ENCODE measurements at regions of chr2 and their contacts with region 1.

Region 1: GRCh38 chr2:197499594-197500526 is at the starts of genes HSPD1 and HSPE1:
- DNase-seq: peak; percentile 97
- ATAC-seq: peak; percentile 88
- H3K4me3 ChIP-seq: peak within 1 kb of the TSS; percentile 88
- H3K27ac ChIP-seq: peak within 1 kb of the TSS; percentile 91
- H3K4me1 ChIP-seq: peaks cover 13% of the 10 kb centered on the region
- H3K27me3 ChIP-seq: no peaks in the 10 kb centered on the region
- CTCF ChIP-seq: no peak
- EP300 ChIP-seq: peak in 1 of 2 experiments; percentile 98; a peak in 2 of 4 replicates
- POLR2A ChIP-seq: peak; percentile 96
- RAD21 ChIP-seq: no peak
- polyA plus RNA-seq, gene HSPD1: 659 to 997 TPM
- polyA plus RNA-seq, gene HSPE1: 872 to 988 TPM

Region 2: GRCh38 chr2:197425550-197425949 is 74.3 kb before region 1 on chr2:
- CTCF ChIA-PET with region 1: no interaction called
- POLR2A ChIA-PET with region 1: interaction called, 45 read pairs
- RAD21 ChIA-PET with region 1: no interaction called
- SMC1A ChIA-PET with region 1: no interaction called
- in situ Hi-C with region 1: no loop called
- intact Hi-C with region 1: loop called (anchors 2 kb)
- DNase-seq: no peak
- ATAC-seq: no peak
- H3K4me3 ChIP-seq: no peak overlapping the region
- H3K27ac ChIP-seq: no peak overlapping the region
- H3K4me1 ChIP-seq: 0 out of 2 replicates have a peak, but pooled peaks cover 3% of the 10 kb centered on the region
- H3K27me3 ChIP-seq: no peaks in the 10 kb centered on the region
- CTCF ChIP-seq: no peak
- EP300 ChIP-seq: no peak
- POLR2A ChIP-seq: no peak
- RAD21 ChIP-seq: no peak

Region 3: DNA sequence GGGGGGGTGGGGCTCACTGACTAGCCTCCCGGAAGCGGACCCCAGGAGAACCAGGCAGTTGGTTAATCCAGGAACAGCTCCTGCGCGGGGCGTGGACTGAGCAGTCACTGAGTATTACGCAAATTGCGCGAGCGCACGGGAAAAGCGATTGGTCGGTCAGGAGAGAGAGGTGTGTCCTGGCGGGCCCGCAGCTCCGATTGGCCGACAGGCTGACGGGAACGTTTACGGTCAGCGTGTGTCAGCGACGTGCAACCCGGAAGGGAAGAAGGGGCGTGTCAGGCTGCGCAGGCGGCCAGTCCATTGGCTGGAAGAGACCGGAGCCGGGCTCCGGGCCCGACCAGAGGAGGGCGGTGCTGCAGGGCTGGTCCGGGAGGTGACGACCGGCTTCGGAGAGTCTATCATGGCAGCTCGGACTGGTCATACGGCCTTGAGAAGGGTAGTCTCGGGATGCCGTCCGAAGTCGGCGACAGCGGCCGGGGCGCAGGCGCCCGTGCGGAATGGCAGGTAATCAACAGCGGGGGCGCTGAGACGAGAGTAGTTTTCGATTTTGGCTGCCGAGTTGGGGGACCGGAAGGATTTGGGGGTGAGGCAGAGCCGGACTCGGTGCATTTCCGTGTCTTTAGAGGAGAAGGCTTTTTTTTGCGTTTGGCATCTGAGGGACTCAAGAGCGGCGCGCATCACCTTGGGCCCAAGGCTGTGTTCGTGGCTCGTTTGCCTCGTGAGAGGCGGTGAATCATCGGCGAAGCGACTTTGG is 46.5 kb before region 1 on chr2 and contains the start of gene COQ10B:
- CTCF ChIA-PET with region 1: interaction called, 3 read pairs
- POLR2A ChIA-PET with region 1: interaction called, 43 read pairs
- RAD21 ChIA-PET with region 1: interaction called, 10 read pairs
- SMC1A ChIA-PET with region 1: interaction called, 9 read pairs
- in situ Hi-C with region 1: no loop called
- intact Hi-C with region 1: loop called (anchors 2 kb)
- DNase-seq: peak; percentile 99
- ATAC-seq: peak; percentile 96
- H3K4me3 ChIP-seq: peak within 1 kb of the TSS; percentile 94
- H3K27ac ChIP-seq: peak within 1 kb of the TSS; percentile 88
- H3K4me1 ChIP-seq: no peaks in the 10 kb centered on the region
- H3K27me3 ChIP-seq: no peaks in the 10 kb centered on the region
- CTCF ChIP-seq: peak in 2 of 3 experiments; percentile 23 to 34; a peak in 3 of 6 replicates
- EP300 ChIP-seq: no peak
- POLR2A ChIP-seq: peak; percentile 89
- RAD21 ChIP-seq: no peak
- polyA plus RNA-seq, gene COQ10B: 7.7 to 13.1 TPM

Region 4: DNA sequence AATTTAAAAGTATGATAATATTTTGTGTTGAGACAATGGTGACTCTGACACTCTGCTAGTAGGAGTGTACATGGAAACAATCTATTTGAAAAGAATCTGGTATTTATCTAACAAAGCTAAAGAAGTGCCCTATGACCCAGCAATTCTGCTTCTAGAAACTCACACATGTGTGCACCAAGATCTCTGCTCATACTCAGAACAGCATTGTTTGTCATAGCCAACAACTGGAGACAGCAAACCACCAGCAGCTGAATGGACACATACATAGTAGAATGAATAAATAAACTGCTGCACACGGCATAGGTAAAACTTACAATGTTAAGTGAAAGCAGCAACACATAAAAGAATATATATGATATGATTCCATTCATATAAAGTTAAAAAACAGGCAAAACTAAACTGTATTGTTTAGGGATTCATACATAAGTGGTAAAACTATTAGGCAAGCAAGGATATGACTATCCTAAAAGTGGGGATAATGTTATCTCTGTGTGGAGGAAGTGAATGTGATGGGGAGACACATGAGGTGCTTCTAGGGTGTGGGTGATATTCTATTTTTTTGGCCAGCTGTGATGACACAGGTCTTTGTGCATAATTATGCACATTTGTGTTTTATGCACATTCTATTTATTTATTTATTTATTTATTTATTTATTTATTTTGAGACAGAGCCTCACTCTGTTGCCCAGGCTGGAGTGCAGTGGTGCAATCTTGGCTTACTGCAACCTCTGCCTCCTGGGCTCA is 104.4 kb after region 1 on chr2:
- CTCF ChIA-PET with region 1: interaction called, 3 read pairs
- POLR2A ChIA-PET with region 1: no interaction called
- RAD21 ChIA-PET with region 1: interaction called, 4 read pairs
- SMC1A ChIA-PET with region 1: interaction called, 4 read pairs
- in situ Hi-C with region 1: no loop called
- intact Hi-C with region 1: loop called (anchors 5 kb)
- DNase-seq: no peak
- ATAC-seq: peak; percentile 50
- H3K4me3 ChIP-seq: no peak overlapping the region
- H3K27ac ChIP-seq: no peak overlapping the region
- H3K4me1 ChIP-seq: peaks cover 15% of the 10 kb centered on the region
- H3K27me3 ChIP-seq: no peaks in the 10 kb centered on the region
- CTCF ChIP-seq: no peak
- EP300 ChIP-seq: no peak
- POLR2A ChIP-seq: no peak
- RAD21 ChIP-seq: no peak

Region 5: DNA sequence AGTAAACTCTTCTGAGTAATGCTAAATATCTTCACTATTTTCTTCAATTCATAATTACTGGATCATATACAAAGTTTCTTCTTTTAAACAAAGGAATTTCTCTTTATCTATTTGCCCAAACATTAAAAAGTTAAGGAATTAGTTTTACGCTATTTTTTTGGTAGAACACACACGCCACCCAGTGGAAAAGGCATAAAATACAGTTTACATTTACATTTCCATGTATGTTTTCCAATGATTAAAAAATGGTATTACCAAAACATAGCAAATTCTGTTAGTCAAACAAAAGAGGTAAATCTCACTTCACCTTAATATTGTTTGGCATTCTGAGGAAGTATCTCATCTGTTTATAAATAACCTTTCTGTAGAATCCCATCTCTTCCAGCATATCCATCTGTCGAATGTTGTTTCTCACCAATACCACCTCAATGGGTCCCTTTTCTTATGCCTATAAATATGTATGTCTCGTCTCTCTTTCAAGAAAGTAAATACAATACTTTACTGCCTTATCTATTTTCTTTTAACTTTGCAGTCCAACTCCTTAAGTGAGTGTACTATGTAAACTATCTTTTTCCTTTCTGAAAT is 278.1 kb after region 1 on chr2:
- CTCF ChIA-PET with region 1: no interaction called
- POLR2A ChIA-PET with region 1: no interaction called
- RAD21 ChIA-PET with region 1: no interaction called
- SMC1A ChIA-PET with region 1: interaction called, 3 read pairs
- in situ Hi-C with region 1: no loop called
- intact Hi-C with region 1: loop called (anchors 5 kb)
- DNase-seq: peak; percentile 12
- ATAC-seq: no peak
- H3K4me3 ChIP-seq: no peak overlapping the region
- H3K27ac ChIP-seq: no peak overlapping the region
- H3K4me1 ChIP-seq: no peaks in the 10 kb centered on the region
- H3K27me3 ChIP-seq: no peaks in the 10 kb centered on the region
- CTCF ChIP-seq: peak; percentile 47 to 69 (median 50); a peak in 4 of 6 replicates
- EP300 ChIP-seq: no peak
- POLR2A ChIP-seq: no peak
- RAD21 ChIP-seq: peak; percentile 85

Measured in GM12878 (cell line).